Caco-2 (cell line): ENCODE measurements at regions of chr11 and their contacts with region 1.

Region 1: DNA sequence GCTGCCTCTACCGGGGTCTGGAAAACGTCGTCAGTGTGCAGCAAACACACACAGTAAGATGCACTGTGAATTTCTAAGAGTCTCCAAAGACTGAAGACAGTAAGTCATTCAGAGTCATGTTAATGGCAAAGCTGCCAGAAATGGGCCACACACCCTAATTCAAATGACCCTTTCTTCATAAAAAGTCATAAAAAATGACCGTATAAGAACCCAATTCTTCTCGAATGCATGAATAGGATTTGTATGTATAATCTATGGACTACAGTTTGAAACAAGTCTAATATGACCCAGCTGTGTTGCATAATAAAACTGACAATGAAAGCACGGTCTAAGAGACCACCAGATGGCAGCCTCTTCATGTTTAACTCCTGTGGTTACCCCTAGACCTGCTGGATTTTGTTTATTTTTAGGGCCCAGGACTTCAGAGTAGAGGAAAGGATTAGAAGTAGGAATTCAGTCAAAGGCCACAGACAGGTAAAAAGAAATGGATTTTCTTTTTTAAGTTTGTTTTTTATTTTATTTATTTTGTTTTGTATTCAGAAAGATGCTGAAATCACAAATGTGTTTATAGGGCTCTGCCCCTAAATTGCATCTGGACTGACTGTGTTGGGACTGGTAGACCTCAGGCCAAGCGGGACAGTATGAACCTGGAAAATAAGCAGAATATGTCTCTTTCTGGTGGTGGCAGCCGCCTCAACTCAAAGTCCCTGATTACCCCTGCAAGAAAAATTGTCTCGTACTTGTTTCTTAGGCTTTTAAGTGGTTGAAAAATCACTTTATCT is 32.1 kb upstream of the SLC5A12 start:
- DNase-seq: peak; percentile 49 to 58
- H3K4me3 ChIP-seq: no peak overlapping the region
- H3K4me3 Mint-ChIP-seq: no peak overlapping the region
- H3K27ac Mint-ChIP-seq: no peak overlapping the region
- H3K4me1 ChIP-seq: no peaks in the 10 kb centered on the region
- H3K4me1 Mint-ChIP-seq: no peaks in the 10 kb centered on the region
- H3K27me3 ChIP-seq: no peaks in the 10 kb centered on the region
- H3K27me3 Mint-ChIP-seq: peaks cover 6% of the 10 kb centered on the region
- CTCF ChIP-seq: peak; percentile 72 to 88

Region 2: GRCh38 chr11:26830757-26831156 is 76.8 kb after region 1 on chr11:
- CTCF ChIA-PET with region 1: no interaction called
- POLR2A ChIA-PET with region 1: no interaction called
- intact Hi-C with region 1: no loop called
- DNase-seq: no peak
- H3K4me3 ChIP-seq: no peak overlapping the region
- H3K4me3 Mint-ChIP-seq: no peak overlapping the region
- H3K27ac Mint-ChIP-seq: no peak overlapping the region
- H3K4me1 ChIP-seq: no peaks in the 10 kb centered on the region
- H3K4me1 Mint-ChIP-seq: no peaks in the 10 kb centered on the region
- H3K27me3 ChIP-seq: no peaks in the 10 kb centered on the region
- H3K27me3 Mint-ChIP-seq: no peaks in the 10 kb centered on the region
- CTCF ChIP-seq: no peak

Region 3: DNA sequence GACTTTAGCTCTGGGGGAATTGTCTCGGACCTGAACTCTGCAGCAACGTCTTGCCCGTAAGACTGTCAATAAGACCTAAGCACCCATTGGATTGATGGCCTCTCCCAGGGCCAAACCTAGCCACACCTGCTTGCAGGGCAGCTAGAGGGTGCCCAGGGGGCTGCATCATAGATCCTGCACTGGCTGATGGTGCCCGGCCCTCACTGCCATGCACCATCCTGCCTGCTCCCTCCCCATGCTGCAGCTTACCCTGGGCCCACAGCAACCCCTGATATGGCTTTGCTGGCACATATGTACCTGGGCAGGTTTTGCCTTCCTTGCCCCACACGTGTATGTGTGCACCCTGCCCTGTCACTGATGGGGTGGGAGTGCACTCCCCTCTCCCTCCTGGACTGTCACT is 277.8 kb after region 1 on chr11:
- CTCF ChIA-PET with region 1: no interaction called
- POLR2A ChIA-PET with region 1: no interaction called
- intact Hi-C with region 1: loop called (anchors 5 kb)
- DNase-seq: no peak
- H3K4me3 ChIP-seq: no peak overlapping the region
- H3K4me3 Mint-ChIP-seq: no peak overlapping the region
- H3K27ac Mint-ChIP-seq: no peak overlapping the region
- H3K4me1 ChIP-seq: no peaks in the 10 kb centered on the region
- H3K4me1 Mint-ChIP-seq: no peaks in the 10 kb centered on the region
- H3K27me3 ChIP-seq: no peaks in the 10 kb centered on the region
- H3K27me3 Mint-ChIP-seq: peaks cover 5% of the 10 kb centered on the region
- CTCF ChIP-seq: no peak

Region 4: GRCh38 chr11:27124514-27125264 is 370.8 kb after region 1 on chr11:
- CTCF ChIA-PET with region 1: no interaction called
- POLR2A ChIA-PET with region 1: no interaction called
- intact Hi-C with region 1: loop called (anchors 1 kb)
- DNase-seq: no peak
- H3K4me3 ChIP-seq: no peak overlapping the region
- H3K4me3 Mint-ChIP-seq: no peak overlapping the region
- H3K27ac Mint-ChIP-seq: no peak overlapping the region
- H3K4me1 ChIP-seq: no peaks in the 10 kb centered on the region
- H3K4me1 Mint-ChIP-seq: no peaks in the 10 kb centered on the region
- H3K27me3 ChIP-seq: no peaks in the 10 kb centered on the region
- H3K27me3 Mint-ChIP-seq: peaks cover 2% of the 10 kb centered on the region
- CTCF ChIP-seq: no peak

Region 5: GRCh38 chr11:27158722-27159679 is 405.1 kb after region 1 on chr11:
- CTCF ChIA-PET with region 1: interaction called, 9 read pairs
- POLR2A ChIA-PET with region 1: no interaction called
- intact Hi-C with region 1: loop called (anchors 1 kb)
- DNase-seq: peak; percentile 59 to 63
- H3K4me3 ChIP-seq: no peak overlapping the region
- H3K4me3 Mint-ChIP-seq: no peak overlapping the region
- H3K27ac Mint-ChIP-seq: no peak overlapping the region
- H3K4me1 ChIP-seq: peaks cover 4% of the 10 kb centered on the region; the same call in 1 of the 2 replicates
- H3K4me1 Mint-ChIP-seq: no peaks in the 10 kb centered on the region
- H3K27me3 ChIP-seq: no peaks in the 10 kb centered on the region
- H3K27me3 Mint-ChIP-seq: peaks cover 2% of the 10 kb centered on the region
- CTCF ChIP-seq: peak; percentile 68 to 76

Region 6: DNA sequence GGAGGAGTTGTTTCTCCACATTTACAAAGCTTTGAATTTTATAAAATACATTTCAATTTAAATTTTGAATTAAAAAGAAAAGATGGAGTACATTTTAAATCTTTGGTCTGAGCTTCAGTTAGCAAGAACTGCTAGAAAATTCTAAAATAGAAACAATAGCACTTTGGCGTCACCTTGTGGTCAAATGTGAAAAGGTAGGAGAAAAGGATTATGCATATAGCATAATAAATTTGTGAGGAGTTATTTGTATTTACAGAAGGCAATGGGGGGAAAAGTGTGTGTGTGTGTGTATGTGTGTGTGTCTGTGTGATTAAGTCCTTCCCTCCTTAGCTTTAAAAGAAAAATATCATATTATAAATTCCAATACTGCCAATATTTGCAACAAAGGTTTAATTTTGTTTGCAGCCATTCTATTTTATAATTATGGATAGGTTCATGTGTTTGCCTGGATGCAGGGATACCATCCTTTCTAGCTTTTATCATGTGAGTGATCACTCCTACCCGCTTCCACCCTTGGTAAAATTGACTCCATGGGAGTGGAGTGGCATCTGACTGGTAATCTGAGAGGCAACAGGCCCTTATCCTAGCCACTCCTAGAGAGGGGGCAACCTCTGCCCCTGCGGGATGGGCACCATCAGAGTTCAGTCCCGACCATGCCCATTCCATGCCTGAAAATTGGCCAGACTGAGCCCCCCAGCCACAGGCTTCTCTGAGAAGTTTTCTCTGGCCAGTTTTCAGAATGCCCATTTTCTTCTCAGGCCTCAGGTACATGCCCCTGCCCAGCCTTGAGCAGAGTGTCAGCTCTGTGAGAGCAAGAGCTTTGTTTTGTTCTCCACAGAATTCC is 732.2 kb after region 1 on chr11:
- CTCF ChIA-PET with region 1: no interaction called
- POLR2A ChIA-PET with region 1: no interaction called
- intact Hi-C with region 1: loop called (anchors 1 kb)
- DNase-seq: peak in 1 of 2 experiments; percentile 67
- H3K4me3 ChIP-seq: no peak overlapping the region
- H3K4me3 Mint-ChIP-seq: no peak overlapping the region
- H3K27ac Mint-ChIP-seq: no peak overlapping the region
- H3K4me1 ChIP-seq: no peaks in the 10 kb centered on the region
- H3K4me1 Mint-ChIP-seq: no peaks in the 10 kb centered on the region
- H3K27me3 ChIP-seq: no peaks in the 10 kb centered on the region
- H3K27me3 Mint-ChIP-seq: no peaks in the 10 kb centered on the region
- CTCF ChIP-seq: peak; percentile 87 to 92

Region 7: DNA sequence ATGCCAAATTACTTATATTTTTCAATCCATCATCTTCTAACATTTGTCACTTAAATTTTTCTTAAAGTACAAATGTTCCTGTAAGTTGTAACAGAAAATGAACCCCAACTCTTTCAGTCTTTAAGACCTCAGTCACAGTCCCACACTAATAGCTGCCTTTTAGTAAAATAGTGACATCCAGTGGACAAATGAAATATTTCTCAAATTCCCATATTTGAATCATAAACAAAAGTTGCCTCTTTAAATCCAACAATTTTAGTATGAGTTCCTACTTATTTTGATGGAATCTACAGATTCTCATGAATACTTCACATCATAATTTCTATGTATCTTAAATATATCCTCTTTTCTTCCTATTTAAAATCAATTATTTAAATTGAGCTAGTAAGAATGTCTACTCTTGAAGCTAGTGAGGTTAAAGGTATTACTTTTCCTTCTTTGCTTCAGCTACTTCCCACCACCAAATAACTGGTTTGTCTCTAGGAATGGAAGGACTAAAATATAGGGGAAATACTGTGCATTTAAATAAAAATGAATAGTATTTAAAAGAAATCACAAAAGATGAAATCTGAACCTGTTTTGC is 743.5 kb after region 1 on chr11:
- CTCF ChIA-PET with region 1: no interaction called
- POLR2A ChIA-PET with region 1: no interaction called
- intact Hi-C with region 1: loop called (anchors 2 kb)
- DNase-seq: no peak
- H3K4me3 ChIP-seq: no peak overlapping the region
- H3K4me3 Mint-ChIP-seq: no peak overlapping the region
- H3K27ac Mint-ChIP-seq: no peak overlapping the region
- H3K4me1 ChIP-seq: no peaks in the 10 kb centered on the region
- H3K4me1 Mint-ChIP-seq: no peaks in the 10 kb centered on the region
- H3K27me3 ChIP-seq: no peaks in the 10 kb centered on the region
- H3K27me3 Mint-ChIP-seq: no peaks in the 10 kb centered on the region
- CTCF ChIP-seq: peak in 1 of 2 experiments; percentile 55